ENCODE measurements at regions of chr17 and their contacts with region 1.

Region 1: DNA sequence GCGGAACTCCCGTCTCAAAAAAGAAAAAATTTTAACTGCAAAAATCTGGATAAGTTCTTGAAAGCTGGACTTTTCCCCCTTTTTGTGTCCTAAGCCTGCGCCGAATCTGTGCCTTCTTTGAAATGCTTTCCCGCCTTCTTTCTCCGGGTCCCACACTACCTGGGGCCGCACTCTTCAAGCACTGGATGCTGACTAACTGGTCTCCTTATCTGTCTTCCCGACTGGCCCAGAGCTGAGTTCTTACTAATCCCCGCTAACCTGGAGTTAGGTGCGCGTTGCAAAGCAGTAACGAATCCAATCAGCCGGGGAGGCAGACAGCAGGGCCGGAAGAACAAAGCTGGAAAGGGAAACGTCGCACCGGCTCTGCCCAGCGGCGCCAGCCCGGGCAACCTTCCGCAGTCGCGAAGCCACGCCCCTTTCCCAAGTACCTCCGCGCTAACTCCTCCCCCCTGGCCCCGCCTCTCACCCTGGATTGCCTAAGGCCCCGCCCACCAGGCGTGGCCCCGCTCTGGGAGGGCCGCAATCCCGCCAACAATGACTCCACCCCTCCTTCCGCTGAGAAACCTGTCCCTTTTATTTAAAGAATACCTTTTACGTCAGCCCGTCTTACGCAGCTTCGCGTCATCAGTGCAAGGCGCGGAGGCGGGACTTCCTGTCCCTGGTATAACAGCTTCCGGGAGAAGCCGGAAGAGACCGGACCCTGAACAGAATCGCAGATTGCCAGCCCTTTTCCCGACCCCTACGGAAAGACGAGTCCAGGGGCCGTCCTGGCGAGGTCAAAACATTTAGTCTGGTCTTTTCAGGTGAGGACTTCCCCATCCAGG is at the start of gene TMUB2:
- DNase-seq: peak; percentile 99 to 100 (median 99)
- H3K4me3 ChIP-seq: peak within 1 kb of the TSS; percentile 96 to 98
- H3K4me3 Mint-ChIP-seq: peak within 1 kb of the TSS; percentile 97 to 100 (median 99)
- H3K27ac ChIP-seq: peak within 1 kb of the TSS; percentile 98
- H3K27ac Mint-ChIP-seq: peak within 1 kb of the TSS; percentile 96 to 100 (median 100)
- H3K4me1 ChIP-seq: peaks cover 44% of the 10 kb centered on the region
- H3K4me1 Mint-ChIP-seq: peaks cover 34 to 67% (median 51%) of the 10 kb centered on the region in 4 donors
- H3K27me3 ChIP-seq: no peaks in the 10 kb centered on the region
- H3K27me3 Mint-ChIP-seq: no peaks in the 10 kb centered on the region
- total RNA-seq, gene TMUB2: 45.4 to 47.9 TPM

Region 2: GRCh38 chr17:44141717-44142285 is 44.7 kb before region 1 on chr17 and contains the start of gene HROB:
- CTCF ChIA-PET with region 1: interaction called, 8 read pairs
- POLR2A ChIA-PET with region 1: interaction called, 9 read pairs
- intact Hi-C with region 1: loop called (anchors 1 kb)
- DNase-seq: peak; percentile 96 to 99 (median 97)
- H3K4me3 ChIP-seq: peak within 1 kb of the TSS; percentile 66 to 69
- H3K4me3 Mint-ChIP-seq: peak within 1 kb of the TSS; percentile 77 to 94 (median 84)
- H3K27ac ChIP-seq: peak within 1 kb of the TSS; percentile 79
- H3K27ac Mint-ChIP-seq: peak within 1 kb of the TSS; percentile 88 to 95 (median 90)
- H3K4me1 ChIP-seq: peaks cover 14% of the 10 kb centered on the region
- H3K4me1 Mint-ChIP-seq: peaks cover 2 to 19% (median 10%) of the 10 kb centered on the region in 4 donors
- H3K27me3 ChIP-seq: no peaks in the 10 kb centered on the region
- H3K27me3 Mint-ChIP-seq: peaks cover 7% of the 10 kb centered on the region in 2 donors
- total RNA-seq, gene HROB: 0.36 to 0.64 TPM

Region 3: GRCh38 chr17:44170499-44171201 is 15.9 kb before region 1 on chr17 and contains the start of gene ASB16:
- CTCF ChIA-PET with region 1: interaction called, 6 read pairs
- POLR2A ChIA-PET with region 1: interaction called, 12 read pairs
- intact Hi-C with region 1: no loop called
- DNase-seq: no peak
- H3K4me3 ChIP-seq: no peak within 1 kb of the TSS
- H3K4me3 Mint-ChIP-seq: no peak within 1 kb of the TSS
- H3K27ac ChIP-seq: no peak within 1 kb of the TSS
- H3K27ac Mint-ChIP-seq: peak within 1 kb of the TSS in 2 of 7 donors; percentile 63 to 89
- H3K4me1 ChIP-seq: peaks cover 6% of the 10 kb centered on the region
- H3K4me1 Mint-ChIP-seq: peaks cover 5 to 16% (median 9%) of the 10 kb centered on the region in 4 donors
- H3K27me3 ChIP-seq: no peaks in the 10 kb centered on the region
- H3K27me3 Mint-ChIP-seq: no peaks in the 10 kb centered on the region
- total RNA-seq, gene ASB16: not detected

Region 4: GRCh38 chr17:44350733-44351226 is 164.3 kb after region 1 on chr17:
- CTCF ChIA-PET with region 1: interaction called, 5 read pairs
- POLR2A ChIA-PET with region 1: interaction called, 10 read pairs
- intact Hi-C with region 1: no loop called
- DNase-seq: peak in 4 of 5 donors; percentile 63 to 70 (median 64)
- H3K4me3 ChIP-seq: no peak overlapping the region
- H3K4me3 Mint-ChIP-seq: peak overlapping the region in 1 of 8 donors; percentile 46
- H3K27ac ChIP-seq: no peak overlapping the region
- H3K27ac Mint-ChIP-seq: peak overlapping the region in 1 of 7 donors; percentile 51
- H3K4me1 ChIP-seq: peaks cover 7% of the 10 kb centered on the region
- H3K4me1 Mint-ChIP-seq: peaks cover 9 to 19% (median 13%) of the 10 kb centered on the region in 4 donors
- H3K27me3 ChIP-seq: no peaks in the 10 kb centered on the region
- H3K27me3 Mint-ChIP-seq: no peaks in the 10 kb centered on the region